ENCODE measurements at regions of chr11 and their contacts with region 1.

Region 1: GRCh38 chr11:16871368-16871767 is 132.9 kb downstream of the C11orf58 start:
- DNase-seq: no peak
- ATAC-seq: peak in 1 of 4 donors; percentile 42
- H3K4me3 ChIP-seq: no peak overlapping the region
- H3K27ac ChIP-seq: no peak overlapping the region
- H3K4me1 ChIP-seq: no peaks in the 10 kb centered on the region
- H3K27me3 ChIP-seq: no peaks in the 10 kb centered on the region
- CTCF ChIP-seq: no peak

Region 2: DNA sequence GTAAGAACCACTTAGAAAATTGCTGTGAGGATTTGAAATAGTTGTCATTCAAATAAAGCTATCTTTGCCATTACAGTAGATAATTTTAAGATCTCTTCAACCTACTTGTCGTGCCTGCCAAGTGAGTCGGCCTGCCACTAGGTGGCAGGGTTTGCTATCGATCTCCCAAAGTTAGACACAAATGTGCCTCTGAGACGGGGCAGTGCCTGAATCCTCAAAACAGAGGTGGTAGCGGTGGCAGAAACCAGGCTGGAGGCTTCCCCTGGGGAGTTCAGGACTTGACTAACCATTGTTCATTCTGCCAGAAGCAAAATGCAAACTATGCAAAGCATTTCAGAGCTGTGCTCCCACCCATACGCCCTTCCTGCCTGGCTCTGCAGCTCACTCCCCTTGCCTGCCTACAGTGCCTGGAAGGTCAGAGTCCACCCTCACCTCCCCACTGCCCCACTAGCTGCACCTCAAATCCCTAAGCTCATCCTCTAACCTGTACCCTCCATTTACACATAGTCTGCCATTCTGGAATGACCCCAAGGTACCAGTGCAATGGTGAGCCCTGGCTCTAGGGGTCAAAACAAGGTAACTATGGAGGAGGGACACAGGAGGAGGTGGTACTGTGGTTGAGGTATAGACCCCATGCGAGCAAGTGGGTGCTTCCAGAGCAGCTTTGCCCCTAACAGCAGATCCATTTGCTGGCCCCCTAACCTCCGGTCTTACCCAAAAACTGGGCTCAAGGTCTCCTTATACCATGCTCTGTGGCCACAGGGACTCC is 50.9 kb before region 1 on chr11:
- intact Hi-C with region 1: loop called in 1 of 3 experiments (anchors 10 kb)
- DNase-seq: peak; percentile 59 to 84 (median 78)
- ATAC-seq: peak; percentile 77 to 92 (median 88)
- H3K4me3 ChIP-seq: no peak overlapping the region
- H3K27ac ChIP-seq: no peak overlapping the region
- H3K4me1 ChIP-seq: peaks cover 0 to 5% (median 0%) of the 10 kb centered on the region in 3 donors
- H3K27me3 ChIP-seq: no peaks in the 10 kb centered on the region
- CTCF ChIP-seq: peak; percentile 67 to 79 (median 70)

Measured in pancreas (tissue), 10 donors.